ENCODE measurements at regions of chr12 and their contacts with region 1.

Region 1: DNA sequence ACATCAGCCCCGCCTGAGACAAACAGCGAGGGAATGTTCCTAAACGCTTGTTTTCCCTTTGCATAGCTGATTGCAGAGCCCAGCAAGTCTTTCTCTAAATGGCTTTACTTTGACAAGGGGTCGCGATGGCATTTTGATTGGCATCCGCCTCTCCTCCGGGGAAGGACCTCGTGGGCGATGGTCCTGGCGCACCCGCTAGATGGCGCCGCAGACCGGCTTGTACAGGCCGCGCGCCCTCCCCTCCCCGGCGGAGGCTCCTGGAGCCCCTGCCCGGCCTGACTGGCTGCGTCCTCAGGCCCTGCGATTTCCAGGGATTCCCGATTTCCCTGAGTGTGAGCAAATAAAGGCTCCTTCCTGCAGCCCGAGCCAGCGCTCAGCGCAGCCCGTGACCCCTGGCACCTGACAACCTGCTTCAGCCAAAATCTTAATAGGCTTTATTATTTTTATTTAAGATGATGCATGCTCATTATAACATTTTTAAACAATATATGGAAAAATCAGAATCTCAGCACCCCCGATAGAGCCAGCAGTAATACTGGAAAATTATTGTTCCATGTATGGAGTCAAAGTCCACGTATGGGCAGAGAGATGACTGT is 468.3 kb downstream of the AACS start:
- DNase-seq: peak; percentile 19 to 84 (median 70)
- H3K4me3 ChIP-seq: peak overlapping the region in 42 of 59 donors; percentile 1 to 56 (median 34)
- H3K27ac ChIP-seq: peak overlapping the region in 14 of 59 donors; percentile 8 to 78 (median 34)
- H3K27me3 ChIP-seq: no peaks in the 10 kb centered on the region
- CTCF ChIP-seq: peak; percentile 36 to 98 (median 88)

Region 2: GRCh38 chr12:125346362-125346761 is 187.2 kb before region 1 on chr12:
- intact Hi-C with region 1: loop called in 1 of 2 experiments (anchors 5 kb)
- DNase-seq: peak in 6 of 10 donors; percentile 40 to 67 (median 53)
- H3K4me3 ChIP-seq: no peak overlapping the region
- H3K27ac ChIP-seq: peak overlapping the region in 9 of 59 donors; percentile 10 to 68 (median 37)
- H3K27me3 ChIP-seq: no peaks in the 10 kb centered on the region
- CTCF ChIP-seq: peak in 55 of 56 donors; percentile 32 to 75 (median 59)

Region 3: GRCh38 chr12:125619723-125620122 is 86.2 kb after region 1 on chr12:
- intact Hi-C with region 1: no loop called
- DNase-seq: no peak
- H3K4me3 ChIP-seq: no peak overlapping the region
- H3K27ac ChIP-seq: no peak overlapping the region
- H3K27me3 ChIP-seq: no peaks in the 10 kb centered on the region
- CTCF ChIP-seq: no peak

Region 4: DNA sequence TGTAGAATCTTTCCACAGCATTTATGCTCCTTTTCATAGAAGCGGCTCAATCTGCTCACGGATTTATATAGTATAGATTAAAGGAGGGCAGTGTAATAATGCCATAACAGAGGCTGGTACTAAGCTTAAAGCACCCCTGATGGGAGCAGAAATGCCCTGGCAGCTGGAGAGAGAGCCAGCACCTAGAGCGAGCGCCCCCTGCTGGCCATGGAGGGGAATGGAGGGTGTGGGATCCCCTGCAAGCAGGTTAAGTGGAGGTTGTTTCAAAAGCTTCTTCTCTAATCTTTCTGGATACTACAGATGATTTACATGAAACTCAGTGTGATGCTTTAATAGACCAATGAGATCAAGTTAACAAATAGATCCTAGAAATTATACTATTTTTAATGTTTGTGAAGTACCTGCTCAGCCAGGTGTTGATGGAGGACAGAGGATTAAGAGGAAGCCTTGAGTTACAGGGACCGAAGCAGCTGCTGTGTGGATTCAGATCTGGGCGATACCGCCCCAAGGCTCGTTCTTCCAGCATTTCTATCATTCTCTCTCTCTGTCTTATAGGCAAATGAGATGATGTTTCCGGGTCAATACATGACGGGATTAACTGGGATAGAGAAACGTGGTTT is 1214.1 kb after region 1 on chr12:
- intact Hi-C with region 1: loop called (anchors 5 kb)
- DNase-seq: peak in 8 of 10 donors; percentile 14 to 70 (median 46)
- H3K4me3 ChIP-seq: no peak overlapping the region
- H3K27ac ChIP-seq: no peak overlapping the region
- H3K27me3 ChIP-seq: no peaks in the 10 kb centered on the region
- CTCF ChIP-seq: peak; percentile 54 to 96 (median 90)

Region 5: DNA sequence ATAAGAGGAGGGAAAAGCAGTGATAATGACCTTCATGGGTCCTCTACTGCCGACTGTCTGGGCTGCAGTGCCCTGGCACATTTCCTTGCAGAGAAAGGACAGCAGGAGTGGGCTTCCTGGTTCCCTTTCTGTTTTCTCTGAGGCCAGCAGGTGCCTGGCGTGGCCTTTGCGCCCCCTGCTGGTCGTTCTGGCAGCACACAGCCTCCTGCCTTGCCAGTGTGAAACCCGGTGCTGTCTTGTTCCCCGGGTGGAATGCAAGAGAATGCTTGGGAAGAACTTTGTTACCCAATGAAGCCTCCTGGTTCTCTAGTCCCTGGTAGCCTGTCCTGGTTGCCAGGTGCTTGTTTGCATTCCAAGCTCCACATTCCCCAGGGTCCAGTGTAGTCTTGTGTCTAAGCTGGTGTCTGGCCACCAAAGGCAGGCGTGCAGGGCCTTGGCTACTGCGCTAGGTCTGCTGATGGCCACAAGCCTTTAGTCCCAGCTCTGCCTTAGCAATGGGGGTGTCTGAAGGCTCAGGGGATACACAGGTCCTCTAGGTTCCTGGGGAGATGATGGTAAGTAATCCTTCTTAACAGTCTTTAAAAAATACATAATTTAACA is 1341.0 kb after region 1 on chr12:
- intact Hi-C with region 1: loop called in 1 of 2 experiments (anchors 5 kb)
- DNase-seq: peak; percentile 37 to 83 (median 72)
- H3K4me3 ChIP-seq: no peak overlapping the region
- H3K27ac ChIP-seq: no peak overlapping the region
- H3K27me3 ChIP-seq: peaks cover 0 to 7% (median 0%) of the 10 kb centered on the region in 45 donors
- CTCF ChIP-seq: peak; percentile 60 to 96 (median 92)